ENCODE measurements at regions of chr12 and their contacts with region 1.

Region 1: DNA sequence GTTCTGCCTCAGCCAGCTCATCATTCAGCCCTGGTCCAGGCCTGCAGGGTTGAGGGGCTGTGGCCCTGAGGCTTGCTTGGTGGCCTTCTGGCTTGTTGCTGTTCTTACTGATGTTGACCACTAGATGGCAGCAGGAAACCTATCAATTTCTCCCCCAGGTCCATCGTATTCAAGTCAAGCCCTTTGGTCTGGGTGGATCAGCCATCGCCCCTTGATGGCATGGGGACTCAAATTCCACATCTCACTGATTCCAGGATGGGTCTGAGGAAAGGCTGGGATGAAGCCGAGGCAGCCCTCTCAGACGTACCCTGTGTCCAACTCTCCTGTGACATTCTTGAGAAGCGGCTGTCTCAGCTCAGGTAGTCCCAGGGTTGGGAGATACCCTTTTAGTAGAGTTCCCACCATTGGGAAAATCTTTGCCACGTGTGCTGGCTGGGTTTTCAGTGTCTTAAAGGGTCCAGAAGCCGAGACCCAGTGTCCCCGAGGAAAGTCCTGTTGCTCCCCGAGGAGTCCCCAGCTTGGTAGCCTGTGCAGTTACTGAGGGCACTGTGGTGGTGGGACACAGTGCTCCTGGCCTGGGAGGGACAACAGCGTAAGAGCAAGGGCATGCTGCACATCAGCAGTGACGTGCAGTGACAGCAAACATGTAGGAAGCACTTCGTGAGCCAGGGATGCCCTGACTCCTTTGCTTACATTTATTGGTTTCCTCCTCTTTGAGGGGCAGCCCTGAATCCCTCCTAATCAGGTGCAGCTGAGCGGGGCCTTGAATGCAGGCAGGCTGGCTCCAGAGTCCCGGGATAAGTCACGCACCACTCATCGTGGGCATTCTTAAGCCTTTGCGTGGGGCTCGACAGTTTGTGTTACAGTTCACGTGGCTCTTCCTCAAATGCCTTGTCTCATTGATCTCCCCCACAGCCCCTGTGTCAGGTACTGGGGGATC is 58.6 kb downstream of the TSPAN9 start:
- DNase-seq: peak; percentile 32 to 38
- H3K4me3 ChIP-seq: no peak overlapping the region
- H3K27ac ChIP-seq: no peak overlapping the region
- H3K4me1 ChIP-seq: peaks cover 13 to 34% of the 10 kb centered on the region in 2 donors
- H3K27me3 ChIP-seq: no peaks in the 10 kb centered on the region
- CTCF ChIP-seq: peak; percentile 67 to 83 (median 74)
- POLR2A ChIP-seq: no peak

Region 2: DNA sequence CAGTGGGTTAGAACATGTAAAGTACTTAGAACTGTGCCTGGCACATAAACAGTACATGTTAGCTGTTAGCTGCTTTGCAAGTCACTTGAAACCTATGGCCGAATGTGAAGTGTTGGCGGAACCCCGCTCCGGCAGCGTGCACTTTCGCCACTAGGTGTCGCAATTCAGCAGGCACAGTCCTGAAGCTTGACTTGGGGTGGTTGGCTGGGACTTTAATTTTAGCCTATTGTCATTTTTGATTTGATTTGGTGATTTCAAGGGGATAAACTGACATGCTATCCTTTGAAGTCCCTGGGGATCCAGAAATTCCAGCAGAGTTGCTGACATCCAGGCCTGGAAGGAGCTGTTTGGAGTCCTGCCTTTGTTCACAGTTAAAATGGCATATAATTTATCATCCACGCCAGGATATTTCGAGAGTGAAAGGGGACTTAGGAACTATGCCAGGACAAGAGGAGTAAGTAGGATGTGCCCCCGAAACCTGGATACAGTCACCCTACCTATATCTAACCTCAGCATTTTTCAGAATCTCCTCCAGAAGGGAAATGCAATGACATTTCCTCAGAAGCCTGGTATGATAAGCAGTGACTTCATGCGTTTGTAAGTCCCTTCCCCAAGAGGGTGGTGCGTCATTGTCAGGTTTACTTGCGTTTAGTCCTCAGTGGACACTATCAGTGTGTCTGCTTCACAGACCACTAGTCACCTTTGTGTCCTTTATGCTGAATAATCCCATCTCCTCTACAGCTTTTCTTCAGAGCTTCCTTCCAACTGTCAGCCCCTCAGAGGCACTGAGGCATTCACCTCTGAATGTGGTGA is 62.1 kb before region 1 on chr12:
- intact Hi-C with region 1: loop called (anchors 10 kb)
- DNase-seq: peak; percentile 80 to 89
- H3K4me3 ChIP-seq: no peak overlapping the region
- H3K27ac ChIP-seq: no peak overlapping the region
- H3K4me1 ChIP-seq: peaks cover 28 to 38% of the 10 kb centered on the region in 2 donors
- H3K27me3 ChIP-seq: no peaks in the 10 kb centered on the region
- CTCF ChIP-seq: peak; percentile 79 to 97 (median 91)
- POLR2A ChIP-seq: no peak

Region 3: DNA sequence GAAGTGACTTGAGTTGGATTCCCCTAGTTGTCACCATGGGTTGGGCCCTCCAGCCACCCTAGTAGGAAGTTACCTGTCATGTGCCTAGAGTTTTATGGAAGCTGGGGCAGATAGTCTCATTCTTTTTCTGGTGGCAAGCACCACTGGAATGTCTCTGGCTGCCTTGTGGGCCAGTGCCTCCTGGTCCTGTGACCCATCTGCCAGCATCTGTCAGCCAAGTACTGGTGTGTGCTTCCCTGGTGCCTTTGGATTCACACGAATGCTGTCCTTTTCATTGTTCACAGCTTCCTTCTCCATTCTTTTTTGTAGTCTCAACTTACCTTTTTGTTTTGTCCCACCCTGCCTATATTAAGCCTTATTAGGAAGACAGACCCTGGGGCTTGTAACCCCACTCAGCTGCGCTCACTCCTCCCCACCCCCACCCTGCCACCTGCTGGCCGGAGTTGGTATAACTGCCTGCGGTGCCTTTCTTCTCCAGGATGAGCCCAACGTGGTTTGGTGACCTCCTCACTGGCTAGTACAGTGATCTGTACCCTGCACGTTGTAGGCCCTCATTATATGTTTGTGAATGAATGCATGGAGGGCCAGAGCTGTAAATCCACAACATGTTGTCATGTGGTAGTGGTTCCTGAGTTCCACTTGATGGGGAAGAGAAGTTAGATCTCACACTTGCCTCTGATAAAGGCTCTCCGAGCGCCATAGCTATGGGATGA is 67.1 kb after region 1 on chr12:
- intact Hi-C with region 1: loop called (anchors 5 kb)
- DNase-seq: peak; percentile 45 to 48
- H3K4me3 ChIP-seq: no peak overlapping the region
- H3K27ac ChIP-seq: no peak overlapping the region
- H3K4me1 ChIP-seq: peaks cover 5 to 55% of the 10 kb centered on the region in 2 donors
- H3K27me3 ChIP-seq: no peaks in the 10 kb centered on the region
- CTCF ChIP-seq: peak; percentile 72 to 97 (median 86)
- POLR2A ChIP-seq: no peak

Region 4: DNA sequence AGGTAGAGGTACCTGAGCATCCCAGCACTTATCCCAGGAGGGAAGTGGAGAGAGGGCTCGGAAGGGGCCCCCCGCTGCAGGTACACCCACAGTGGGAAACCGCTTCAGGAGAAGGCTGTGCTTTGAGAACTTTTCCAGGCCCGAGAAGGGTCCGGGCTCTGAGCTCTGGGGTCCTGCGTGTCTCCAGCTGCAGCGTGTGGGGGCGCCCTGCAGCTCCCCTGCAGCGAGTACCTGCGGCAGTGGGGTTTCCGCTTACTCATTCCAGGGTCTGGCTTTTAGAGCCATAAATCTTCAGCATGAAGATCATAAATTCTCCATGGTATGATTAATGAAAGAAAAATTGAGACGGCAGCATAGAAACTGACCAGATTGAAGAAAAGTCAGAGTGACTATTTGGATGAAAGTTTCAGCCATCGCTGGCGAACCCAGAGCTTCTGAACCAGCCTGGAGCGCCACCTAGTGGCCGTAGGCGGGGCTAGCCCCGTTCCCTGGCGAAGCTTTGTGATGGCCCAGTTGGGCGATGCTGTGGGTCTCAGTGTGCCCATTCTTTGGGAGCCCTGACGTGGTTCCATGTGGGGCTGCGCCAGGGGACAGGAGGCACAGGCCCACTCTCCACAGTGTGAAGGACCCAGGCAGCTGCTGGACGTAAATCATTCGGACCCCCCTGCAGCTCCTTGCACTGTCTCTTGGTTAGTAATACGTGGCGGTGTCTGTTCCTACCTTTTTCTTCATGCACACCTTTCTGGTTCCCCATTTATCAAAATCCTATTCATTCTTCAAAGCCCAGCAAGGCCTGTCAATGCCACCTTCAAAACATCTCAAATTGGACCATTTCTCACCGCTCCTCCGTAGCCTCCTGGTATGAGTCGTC is 139.6 kb after region 1 on chr12:
- intact Hi-C with region 1: loop called (anchors 2 kb)
- DNase-seq: peak; percentile 75 to 77
- H3K4me3 ChIP-seq: no peak overlapping the region
- H3K27ac ChIP-seq: no peak overlapping the region
- H3K4me1 ChIP-seq: peaks cover 15 to 32% of the 10 kb centered on the region in 2 donors
- H3K27me3 ChIP-seq: no peaks in the 10 kb centered on the region
- CTCF ChIP-seq: peak; percentile 85 to 97 (median 90)
- POLR2A ChIP-seq: no peak

Measured in thyroid gland (tissue), 4 donors.